IMR-90 (cell line): ENCODE measurements at regions of chr13 and their contacts with region 1.

Region 1: GRCh38 chr13:22311734-22312404 is 641.0 kb downstream of the FGF9 start:
- DNase-seq: no peak
- ATAC-seq: no peak
- H3K4me3 ChIP-seq: no peak overlapping the region
- H3K27ac ChIP-seq: no peak overlapping the region
- H3K4me1 ChIP-seq: no peaks in the 10 kb centered on the region
- H3K27me3 ChIP-seq: no peaks in the 10 kb centered on the region
- CTCF ChIP-seq: no peak
- POLR2A ChIP-seq: no peak
- RAD21 ChIP-seq: no peak

Region 2: DNA sequence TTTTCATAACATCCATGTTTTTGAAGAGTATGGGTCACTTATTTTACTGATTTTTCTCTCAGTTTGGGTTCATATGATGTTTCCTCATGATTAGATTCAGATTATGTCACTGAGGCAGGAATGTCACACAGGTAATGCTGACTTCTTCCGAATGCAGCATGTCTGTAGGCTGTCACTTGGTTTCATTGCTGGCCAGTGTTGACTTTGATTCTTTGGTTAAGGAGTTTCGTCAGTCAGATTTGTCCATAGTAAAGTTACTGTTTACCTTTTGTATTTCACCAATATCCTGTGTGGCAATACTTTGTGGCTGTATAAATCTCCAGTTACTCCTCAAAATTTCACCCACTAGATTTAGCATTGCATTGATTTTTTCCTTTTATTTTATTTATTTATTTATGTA is 1029.8 kb before region 1 on chr13:
- CTCF ChIA-PET with region 1: no interaction called
- POLR2A ChIA-PET with region 1: no interaction called
- dilution Hi-C with region 1: no loop called
- in situ Hi-C with region 1: no loop called
- intact Hi-C with region 1: loop called (anchors 5 kb)
- DNase-seq: no peak
- ATAC-seq: no peak
- H3K4me3 ChIP-seq: no peak overlapping the region
- H3K27ac ChIP-seq: no peak overlapping the region
- H3K4me1 ChIP-seq: no peaks in the 10 kb centered on the region
- H3K27me3 ChIP-seq: no peaks in the 10 kb centered on the region
- CTCF ChIP-seq: no peak
- POLR2A ChIP-seq: no peak
- RAD21 ChIP-seq: no peak